A673 (cell line): ENCODE measurements at regions of chrX and their contacts with region 1.

Region 1: GRCh38 chrX:134745636-134746409 is 87.6 kb upstream of the PLAC1 start:
- DNase-seq: no peak
- H3K4me3 ChIP-seq: no peak overlapping the region
- H3K27ac ChIP-seq: no peak overlapping the region
- H3K4me1 ChIP-seq: no peaks in the 10 kb centered on the region
- H3K27me3 ChIP-seq: no peaks in the 10 kb centered on the region
- CTCF ChIP-seq: no peak

Region 2: GRCh38 chrX:135050603-135051002 is 304.8 kb after region 1 on chrX:
- CTCF ChIA-PET with region 1: no interaction called
- POLR2A ChIA-PET with region 1: interaction called, 10 read pairs
- intact Hi-C with region 1: no loop called
- DNase-seq: no peak
- H3K4me3 ChIP-seq: peak overlapping the region; percentile 56
- H3K27ac ChIP-seq: no peak overlapping the region
- H3K4me1 ChIP-seq: no peaks in the 10 kb centered on the region
- H3K27me3 ChIP-seq: no peaks in the 10 kb centered on the region
- CTCF ChIP-seq: no peak